Prostate gland (tissue), 2 donors: ENCODE measurements at regions of chr10 and their contacts with region 1.

Region 1: DNA sequence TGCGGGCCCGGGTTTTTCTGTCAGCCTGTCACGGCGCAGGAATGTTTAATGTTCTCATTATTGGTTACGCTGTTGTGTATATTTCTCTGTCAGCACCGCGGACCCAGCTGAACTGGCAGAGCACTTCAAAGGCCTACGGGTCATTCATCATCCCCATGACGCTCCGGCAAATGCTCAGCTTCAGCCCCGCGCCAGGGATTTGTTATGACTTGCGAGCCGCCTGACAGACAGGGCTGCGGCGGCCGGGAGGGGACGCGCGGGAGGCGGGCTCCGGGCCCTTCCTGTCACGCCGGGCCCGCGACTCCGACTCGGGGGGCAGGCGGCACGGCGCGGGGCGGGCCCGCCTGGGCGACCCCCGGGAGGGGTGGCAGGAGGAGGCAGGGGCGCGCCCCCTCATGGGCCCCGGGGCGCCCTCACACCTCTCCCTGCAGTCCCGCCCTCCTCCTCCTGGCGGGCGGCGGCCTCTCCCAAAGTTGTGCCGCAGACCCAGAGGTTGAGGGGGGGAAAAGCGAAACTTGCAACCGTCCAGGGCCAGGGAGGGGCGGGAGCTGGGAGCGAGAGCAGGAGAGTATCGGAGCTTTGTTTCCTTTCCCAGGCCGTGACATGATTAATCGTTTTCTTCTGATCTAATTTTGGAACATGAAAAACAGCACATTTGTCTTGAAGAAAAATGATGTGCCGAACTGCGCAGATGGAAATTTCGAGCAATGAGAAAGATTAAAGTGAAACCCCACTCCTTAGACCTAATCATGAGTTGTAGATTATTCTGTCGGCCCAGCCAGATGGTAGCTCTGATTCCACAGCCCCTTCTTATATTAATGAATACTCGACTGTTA is 59.3 kb upstream of the COMTD1 start:
- DNase-seq: peak; percentile 94
- H3K4me3 ChIP-seq: peak overlapping the region; percentile 53 to 69
- H3K27ac ChIP-seq: peak overlapping the region; percentile 92 to 97
- H3K4me1 ChIP-seq: peaks cover 3% of the 10 kb centered on the region
- H3K27me3 ChIP-seq: no peaks in the 10 kb centered on the region
- CTCF ChIP-seq: peak in 3 of 4 experiments; percentile 24 to 50 (median 41)
- POLR2A ChIP-seq: peak; percentile 50

Region 2: DNA sequence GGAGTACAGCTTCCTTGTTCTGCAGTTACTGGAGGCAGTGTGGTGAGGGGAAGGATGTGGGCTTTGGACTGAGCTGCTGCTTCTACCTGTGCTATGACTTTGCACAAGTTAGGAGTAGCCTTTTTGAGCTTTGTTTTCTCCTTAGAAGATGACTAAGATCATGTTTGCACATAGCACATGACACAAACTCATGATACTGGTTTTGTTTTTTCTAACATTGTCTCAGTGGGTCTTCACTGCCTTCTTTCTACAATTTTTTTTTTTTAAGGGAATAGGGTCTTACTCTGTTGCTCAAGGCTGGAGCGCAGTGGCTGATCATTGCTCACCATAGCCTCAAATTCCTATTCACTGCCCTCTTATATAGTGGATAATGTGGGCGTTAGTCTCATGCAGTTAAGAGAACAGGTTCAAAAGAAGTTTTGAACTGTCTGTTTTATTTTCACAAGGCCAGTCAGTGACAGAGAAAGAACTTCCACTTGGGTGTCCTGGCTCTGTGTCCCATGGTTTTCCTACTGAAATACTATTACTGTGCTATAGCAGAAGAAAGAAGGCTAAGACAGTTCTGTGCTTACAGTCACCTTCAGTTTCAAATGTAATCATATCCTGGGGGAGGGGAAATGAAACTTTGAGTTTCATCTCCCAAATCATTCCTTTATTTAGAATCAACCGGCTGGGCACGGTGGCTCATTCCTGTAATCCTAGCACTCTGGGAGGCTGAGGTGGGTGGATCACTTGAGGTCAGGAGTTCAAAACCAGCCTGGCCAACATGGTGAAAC is 396.7 kb before region 1 on chr10:
- intact Hi-C with region 1: no loop called
- DNase-seq: no peak
- H3K4me3 ChIP-seq: no peak overlapping the region
- H3K27ac ChIP-seq: no peak overlapping the region
- H3K4me1 ChIP-seq: no peaks in the 10 kb centered on the region
- H3K27me3 ChIP-seq: no peaks in the 10 kb centered on the region
- CTCF ChIP-seq: no peak
- POLR2A ChIP-seq: no peak

Region 3: GRCh38 chr10:75058161-75058560 is 236.9 kb before region 1 on chr10:
- intact Hi-C with region 1: no loop called
- DNase-seq: no peak
- H3K4me3 ChIP-seq: no peak overlapping the region
- H3K27ac ChIP-seq: no peak overlapping the region
- H3K4me1 ChIP-seq: no peaks in the 10 kb centered on the region
- H3K27me3 ChIP-seq: no peaks in the 10 kb centered on the region
- CTCF ChIP-seq: no peak
- POLR2A ChIP-seq: no peak

Region 4: GRCh38 chr10:75070961-75071428 is 224.1 kb before region 1 on chr10:
- intact Hi-C with region 1: no loop called
- DNase-seq: no peak
- H3K4me3 ChIP-seq: no peak overlapping the region
- H3K27ac ChIP-seq: no peak overlapping the region
- H3K4me1 ChIP-seq: no peaks in the 10 kb centered on the region
- H3K27me3 ChIP-seq: no peaks in the 10 kb centered on the region
- CTCF ChIP-seq: no peak
- POLR2A ChIP-seq: no peak

Region 5: DNA sequence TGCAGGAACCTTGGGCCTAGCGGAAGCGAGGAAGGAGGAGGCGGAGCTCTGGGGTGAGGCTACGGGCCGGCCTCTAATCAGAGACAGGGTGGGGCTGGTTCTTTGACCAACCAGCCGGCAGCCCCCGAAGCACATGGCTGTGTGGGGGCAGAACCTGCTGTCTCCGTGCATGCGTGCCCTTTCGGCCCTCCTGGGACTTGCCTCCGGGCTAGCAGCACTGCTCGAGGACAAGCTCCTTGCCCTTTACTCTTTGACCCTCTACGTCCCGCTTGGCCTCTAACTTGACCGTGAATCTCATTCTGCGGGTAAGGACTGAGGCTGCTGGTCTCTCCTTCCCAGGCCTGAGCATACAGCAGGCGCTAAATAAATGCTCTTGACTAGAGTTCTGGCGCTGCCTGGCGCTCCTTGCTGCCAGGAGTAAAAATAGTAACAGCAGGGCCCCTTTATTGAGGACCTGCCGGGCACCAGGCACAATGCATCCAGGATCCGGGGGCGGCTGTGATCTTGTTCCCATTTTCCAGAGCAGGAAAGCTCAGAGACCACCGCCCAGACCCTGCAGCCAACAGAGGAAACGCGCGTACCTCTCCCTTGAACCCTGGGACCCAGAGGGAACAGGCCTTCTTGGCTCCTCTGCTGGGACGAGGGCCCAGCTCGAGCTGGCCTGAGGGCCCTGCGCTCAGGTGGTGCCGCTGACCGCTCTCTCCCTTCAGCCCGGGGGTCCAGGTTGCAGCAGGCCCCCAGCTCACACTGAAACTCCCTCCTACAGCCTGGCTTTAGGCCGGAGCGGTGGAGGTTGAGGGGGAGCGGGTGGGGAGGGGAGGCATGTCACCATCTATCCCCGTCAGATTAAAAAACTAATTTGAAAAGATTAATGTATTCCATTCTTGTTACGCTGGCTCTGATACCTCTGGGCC is 56.6 kb before region 1 on chr10:
- intact Hi-C with region 1: no loop called
- DNase-seq: no peak
- H3K4me3 ChIP-seq: no peak overlapping the region
- H3K27ac ChIP-seq: no peak overlapping the region
- H3K4me1 ChIP-seq: peaks cover 5% of the 10 kb centered on the region
- H3K27me3 ChIP-seq: no peaks in the 10 kb centered on the region
- CTCF ChIP-seq: no peak
- POLR2A ChIP-seq: no peak

Region 6: DNA sequence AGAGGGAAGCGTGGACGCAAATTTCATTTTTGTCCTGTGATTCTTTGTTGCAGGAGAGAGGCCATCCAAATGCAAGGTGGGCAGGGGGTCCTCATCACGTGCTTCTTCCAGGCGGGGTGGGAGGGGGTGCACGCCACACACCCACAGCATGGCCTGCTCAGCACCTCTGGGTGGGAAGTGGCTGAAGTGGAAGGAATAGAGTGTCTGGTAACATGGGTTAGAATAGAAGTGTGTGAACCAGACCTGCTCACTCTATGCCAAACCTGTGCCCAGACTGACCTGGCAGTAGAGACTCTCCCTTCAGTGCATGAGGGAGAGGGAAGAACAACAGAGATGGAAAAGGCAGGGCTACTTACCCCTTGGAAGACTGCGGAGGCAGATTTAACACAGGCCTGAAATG is 84.7 kb after region 1 on chr10:
- intact Hi-C with region 1: loop called (anchors 5 kb)
- DNase-seq: no peak
- H3K4me3 ChIP-seq: no peak overlapping the region
- H3K27ac ChIP-seq: no peak overlapping the region
- H3K4me1 ChIP-seq: no peaks in the 10 kb centered on the region
- H3K27me3 ChIP-seq: no peaks in the 10 kb centered on the region
- CTCF ChIP-seq: no peak
- POLR2A ChIP-seq: no peak

Region 7: DNA sequence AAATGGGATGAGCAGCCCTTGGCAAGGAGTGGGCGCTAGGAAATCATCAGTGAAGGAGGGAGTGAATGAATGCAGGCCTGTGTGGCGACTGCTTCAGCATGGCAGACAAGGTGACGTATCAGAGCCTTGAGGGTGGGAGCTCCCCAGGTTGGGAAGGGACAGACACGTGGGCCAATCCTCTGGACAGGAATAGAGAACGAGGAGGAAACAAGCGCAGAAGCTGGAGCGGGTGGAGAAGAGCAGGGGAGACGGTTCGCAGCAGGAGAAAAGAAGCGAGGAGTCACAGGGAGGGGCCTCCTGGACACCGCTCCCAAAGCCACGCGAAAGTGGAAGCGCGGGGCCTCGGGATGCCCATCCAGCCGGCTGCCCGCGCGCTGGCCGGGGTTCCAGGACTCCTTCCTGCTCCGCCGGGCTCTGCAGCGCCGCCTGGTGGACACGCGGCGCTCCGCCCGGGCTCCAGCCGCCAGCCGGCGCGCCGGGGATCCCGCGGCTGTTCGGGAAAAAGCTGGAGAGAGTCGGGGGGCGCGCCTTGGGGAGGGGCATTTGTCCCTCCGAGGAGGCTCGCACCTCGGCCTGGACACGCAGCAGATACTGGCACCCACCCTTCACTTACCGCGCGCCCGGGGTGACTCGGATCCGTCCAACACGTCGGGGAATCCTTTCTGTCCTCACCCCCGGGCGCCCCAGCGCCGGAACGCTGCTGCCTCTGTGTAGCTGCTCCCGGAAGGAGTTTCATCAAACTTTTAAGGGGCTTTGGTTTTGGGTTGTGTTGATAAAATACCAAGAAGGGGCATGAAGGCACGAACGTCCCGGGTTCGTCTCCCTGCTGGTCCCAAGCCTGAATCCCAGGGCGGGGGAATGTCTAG is 100.2 kb after region 1 on chr10:
- intact Hi-C with region 1: loop called (anchors 1 kb)
- DNase-seq: peak; percentile 32
- H3K4me3 ChIP-seq: peak overlapping the region; percentile 98 to 100
- H3K27ac ChIP-seq: peak overlapping the region; percentile 98 to 99
- H3K4me1 ChIP-seq: peaks cover 5% of the 10 kb centered on the region
- H3K27me3 ChIP-seq: no peaks in the 10 kb centered on the region
- CTCF ChIP-seq: peak; percentile 83 to 94 (median 90)
- POLR2A ChIP-seq: no peak

Region 8: GRCh38 chr10:75651417-75651816 is 356.3 kb after region 1 on chr10:
- intact Hi-C with region 1: loop called (anchors 10 kb)
- DNase-seq: no peak
- H3K4me3 ChIP-seq: no peak overlapping the region
- H3K27ac ChIP-seq: no peak overlapping the region
- H3K4me1 ChIP-seq: no peaks in the 10 kb centered on the region
- H3K27me3 ChIP-seq: no peaks in the 10 kb centered on the region
- CTCF ChIP-seq: peak in 2 of 4 experiments; percentile 6 to 16
- POLR2A ChIP-seq: no peak